Activated CD4-positive, alpha-beta T cell treated with anti-CD3 and anti-CD28 coated beads for 36 hours (primary cell): ENCODE measurements at regions of chr2 and their contacts with region 1.

Region 1: DNA sequence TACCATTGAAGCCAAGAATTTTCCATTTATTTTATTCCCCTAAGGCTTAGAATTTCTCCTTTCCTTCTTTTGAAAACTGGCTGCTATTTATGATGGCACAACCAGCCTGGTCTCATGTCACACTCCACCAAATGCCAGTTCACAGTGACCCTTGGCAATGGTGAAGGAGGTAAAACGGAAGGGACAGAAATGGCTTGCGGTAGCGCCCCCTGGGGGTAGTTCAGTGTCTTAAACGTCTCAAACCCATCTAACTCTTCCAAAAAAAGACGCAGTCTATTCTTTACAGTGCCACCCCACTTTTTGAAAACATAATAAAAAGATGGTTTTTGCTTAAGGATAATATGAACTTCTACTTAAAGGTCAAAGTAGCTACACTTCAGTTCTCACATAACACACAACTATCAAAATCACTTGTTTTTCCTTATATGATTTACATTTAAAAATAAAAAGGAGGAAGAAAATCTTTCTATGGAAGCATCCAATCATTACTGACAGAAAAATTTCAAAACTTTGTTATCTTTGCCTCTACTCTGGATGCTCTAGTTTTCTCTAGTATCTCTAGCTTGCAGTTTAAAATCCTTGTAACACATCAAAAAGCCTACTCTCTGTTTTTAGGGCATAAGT is 28.0 kb downstream of the PNO1 start:
- DNase-seq: peak; percentile 81
- ATAC-seq: peak; percentile 51
- H3K4me3 Mint-ChIP-seq: no peak overlapping the region
- H3K27ac Mint-ChIP-seq: no peak overlapping the region
- H3K4me1 Mint-ChIP-seq: peaks cover 20% of the 10 kb centered on the region
- H3K27me3 Mint-ChIP-seq: no peaks in the 10 kb centered on the region

Region 2: GRCh38 chr2:68244456-68244855 is 58.8 kb after region 1 on chr2:
- CTCF ChIA-PET with region 1: interaction called, 10 read pairs
- POLR2A ChIA-PET with region 1: interaction called, 3 read pairs
- intact Hi-C with region 1: no loop called
- DNase-seq: no peak
- ATAC-seq: no peak
- H3K4me3 Mint-ChIP-seq: no peak overlapping the region
- H3K27ac Mint-ChIP-seq: no peak overlapping the region
- H3K4me1 Mint-ChIP-seq: peaks cover 29% of the 10 kb centered on the region
- H3K27me3 Mint-ChIP-seq: no peaks in the 10 kb centered on the region

Region 3: GRCh38 chr2:68282811-68283418 is 97.3 kb after region 1 on chr2:
- CTCF ChIA-PET with region 1: interaction called, 10 read pairs
- POLR2A ChIA-PET with region 1: no interaction called
- intact Hi-C with region 1: no loop called
- DNase-seq: peak; percentile 30
- ATAC-seq: peak; percentile 64
- H3K4me3 Mint-ChIP-seq: no peak overlapping the region
- H3K27ac Mint-ChIP-seq: no peak overlapping the region
- H3K4me1 Mint-ChIP-seq: peaks cover 5% of the 10 kb centered on the region
- H3K27me3 Mint-ChIP-seq: peaks cover 7% of the 10 kb centered on the region